ENCODE measurements at regions of chr1 and their contacts with region 1.

Region 1: GRCh38 chr1:21368515-21369289 is 71.2 kb upstream of the NBPF3 start:
- DNase-seq: peak; percentile 69
- H3K4me3 Mint-ChIP-seq: peak overlapping the region; percentile 2
- H3K27ac Mint-ChIP-seq: peak overlapping the region; percentile 10
- H3K4me1 Mint-ChIP-seq: peaks cover 10% of the 10 kb centered on the region
- H3K27me3 Mint-ChIP-seq: no peaks in the 10 kb centered on the region

Region 2: DNA sequence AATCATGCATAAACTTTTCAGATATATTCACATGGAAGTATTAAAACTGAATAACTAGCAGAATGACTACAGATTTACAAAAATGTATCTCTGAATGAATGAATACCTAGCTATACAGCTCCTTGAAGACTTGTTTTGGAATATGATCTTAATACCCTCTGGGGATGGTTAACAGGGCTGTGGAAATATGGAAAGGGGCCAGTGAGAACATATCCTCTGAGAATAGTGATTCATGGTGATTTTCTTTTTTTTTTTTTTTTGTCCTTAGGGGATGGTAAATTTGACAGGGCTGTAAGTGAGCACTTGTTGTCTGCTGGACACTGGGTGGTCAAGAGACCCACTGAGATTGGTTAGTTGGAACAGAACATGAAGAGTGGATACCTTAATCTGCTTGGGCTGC is 500.9 kb before region 1 on chr1:
- CTCF ChIA-PET with region 1: no interaction called
- POLR2A ChIA-PET with region 1: no interaction called
- intact Hi-C with region 1: no loop called
- DNase-seq: no peak
- H3K4me3 Mint-ChIP-seq: no peak overlapping the region
- H3K27ac Mint-ChIP-seq: no peak overlapping the region
- H3K4me1 Mint-ChIP-seq: peaks cover 7% of the 10 kb centered on the region
- H3K27me3 Mint-ChIP-seq: no peaks in the 10 kb centered on the region

Region 3: DNA sequence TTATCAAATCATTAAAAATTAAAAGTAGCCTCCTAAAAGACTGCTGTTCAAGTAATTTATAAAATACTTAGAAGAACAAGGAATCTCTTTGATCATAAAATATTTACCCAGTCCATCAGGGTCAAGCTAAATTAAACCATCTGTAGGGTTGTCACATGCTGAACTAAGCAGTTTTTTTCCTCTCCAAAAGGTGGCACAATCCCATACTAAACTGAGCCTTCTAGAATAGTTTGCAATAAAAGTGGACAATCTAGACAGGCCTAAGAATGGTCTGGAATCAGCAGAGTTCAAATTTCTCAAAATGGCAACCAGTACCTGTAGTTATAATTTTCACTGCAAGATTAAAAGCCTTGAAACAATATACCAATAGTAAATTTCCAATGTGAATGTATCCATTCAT is 386.8 kb before region 1 on chr1:
- CTCF ChIA-PET with region 1: no interaction called
- POLR2A ChIA-PET with region 1: no interaction called
- intact Hi-C with region 1: no loop called
- DNase-seq: no peak
- H3K4me3 Mint-ChIP-seq: no peak overlapping the region
- H3K27ac Mint-ChIP-seq: no peak overlapping the region
- H3K4me1 Mint-ChIP-seq: no peaks in the 10 kb centered on the region
- H3K27me3 Mint-ChIP-seq: no peaks in the 10 kb centered on the region

Region 4: DNA sequence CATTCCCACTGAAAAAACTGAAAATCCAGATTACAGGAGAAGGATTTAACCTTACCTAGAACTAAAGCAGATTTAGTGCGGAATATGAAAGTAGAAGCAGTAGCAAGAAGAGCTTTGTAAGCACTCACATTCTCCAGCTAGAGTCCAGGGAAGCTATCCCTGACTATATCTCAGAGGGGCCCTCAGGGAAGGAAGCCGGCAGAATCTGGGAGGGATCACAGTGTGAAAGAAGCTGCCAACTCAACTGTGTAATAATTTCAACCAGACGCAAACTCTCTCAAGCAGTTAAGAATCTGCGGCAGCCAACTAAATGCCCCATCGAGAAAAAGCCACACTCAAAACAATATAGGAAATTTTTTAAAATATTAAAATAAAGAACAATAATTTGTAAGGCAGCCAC is 355.8 kb before region 1 on chr1:
- CTCF ChIA-PET with region 1: no interaction called
- POLR2A ChIA-PET with region 1: no interaction called
- intact Hi-C with region 1: no loop called
- DNase-seq: no peak
- H3K4me3 Mint-ChIP-seq: no peak overlapping the region
- H3K27ac Mint-ChIP-seq: no peak overlapping the region
- H3K4me1 Mint-ChIP-seq: peaks cover 6% of the 10 kb centered on the region
- H3K27me3 Mint-ChIP-seq: no peaks in the 10 kb centered on the region

Region 5: GRCh38 chr1:21232044-21232443 is 136.7 kb before region 1 on chr1:
- CTCF ChIA-PET with region 1: interaction called, 159 read pairs
- POLR2A ChIA-PET with region 1: no interaction called
- intact Hi-C with region 1: loop called (anchors 1 kb)
- DNase-seq: no peak
- H3K4me3 Mint-ChIP-seq: no peak overlapping the region
- H3K27ac Mint-ChIP-seq: no peak overlapping the region
- H3K4me1 Mint-ChIP-seq: no peaks in the 10 kb centered on the region
- H3K27me3 Mint-ChIP-seq: no peaks in the 10 kb centered on the region

Region 6: GRCh38 chr1:21255278-21255942 is 113.3 kb before region 1 on chr1:
- CTCF ChIA-PET with region 1: interaction called, 128 read pairs
- POLR2A ChIA-PET with region 1: interaction called, 4 read pairs
- intact Hi-C with region 1: loop called (anchors 1 kb)
- DNase-seq: peak; percentile 88
- H3K4me3 Mint-ChIP-seq: no peak overlapping the region
- H3K27ac Mint-ChIP-seq: peak overlapping the region; percentile 59
- H3K4me1 Mint-ChIP-seq: peaks cover 48% of the 10 kb centered on the region
- H3K27me3 Mint-ChIP-seq: no peaks in the 10 kb centered on the region

Region 7: DNA sequence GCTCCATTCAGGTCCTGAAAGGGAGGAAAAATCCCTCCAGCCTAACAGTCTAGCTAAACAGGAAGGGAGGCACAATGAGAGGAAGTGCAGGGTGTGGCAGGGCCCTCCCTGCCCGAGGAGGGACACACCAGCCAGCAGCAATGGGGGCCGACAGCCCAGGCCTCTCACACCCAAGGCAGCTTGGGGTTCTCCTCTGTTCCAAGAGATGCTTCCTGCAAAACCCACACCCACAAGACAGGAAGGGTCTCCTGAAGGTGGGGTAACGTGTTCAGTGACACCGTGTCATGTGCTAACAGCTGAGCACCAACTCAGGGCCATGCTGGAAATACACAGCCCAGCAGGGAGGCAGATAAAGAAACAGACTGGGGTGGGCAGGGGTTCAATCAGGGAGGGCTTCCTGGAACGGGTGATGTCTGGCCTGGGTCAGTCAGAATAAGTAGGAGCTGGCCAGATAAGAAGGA is 88.7 kb before region 1 on chr1:
- CTCF ChIA-PET with region 1: interaction called, 12 read pairs
- POLR2A ChIA-PET with region 1: no interaction called
- intact Hi-C with region 1: no loop called
- DNase-seq: no peak
- H3K4me3 Mint-ChIP-seq: peak overlapping the region; percentile 58
- H3K27ac Mint-ChIP-seq: peak overlapping the region; percentile 96
- H3K4me1 Mint-ChIP-seq: peaks cover 62% of the 10 kb centered on the region
- H3K27me3 Mint-ChIP-seq: no peaks in the 10 kb centered on the region

Region 8: DNA sequence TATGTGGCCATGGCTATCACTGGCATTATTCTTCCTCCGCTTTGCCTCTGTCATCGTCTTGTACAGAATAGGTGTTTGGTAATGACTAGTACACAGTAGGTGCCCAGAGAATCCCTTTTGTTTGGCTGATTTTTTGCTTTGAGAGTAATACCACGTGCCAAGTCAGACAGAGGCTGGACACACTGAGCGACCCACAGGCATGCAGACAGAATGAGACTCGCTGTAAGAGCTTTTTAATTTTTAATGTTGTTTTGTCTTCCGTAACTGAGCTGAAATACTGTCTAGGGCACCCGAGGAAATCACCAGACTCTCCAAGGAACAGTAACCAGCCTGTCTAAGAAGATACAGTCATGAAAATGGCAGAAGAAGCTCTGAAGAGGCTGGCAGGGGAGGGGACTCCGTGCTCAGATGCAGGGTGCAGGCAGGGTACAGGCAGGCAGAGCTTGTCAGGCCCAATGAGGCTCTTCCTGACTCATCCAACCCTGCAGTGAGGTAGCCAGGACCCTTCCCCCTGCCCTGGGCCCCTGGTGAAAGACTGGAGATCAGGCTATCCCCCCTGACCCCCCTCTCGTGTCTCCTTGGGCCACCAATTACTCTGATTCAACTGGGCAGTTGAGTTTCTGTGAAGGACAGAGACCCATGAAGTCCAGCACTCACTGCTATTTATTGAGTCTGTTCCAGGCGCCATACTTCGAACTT is 18.4 kb before region 1 on chr1:
- CTCF ChIA-PET with region 1: interaction called, 15 read pairs
- POLR2A ChIA-PET with region 1: interaction called, 3 read pairs
- intact Hi-C with region 1: no loop called
- DNase-seq: no peak
- H3K4me3 Mint-ChIP-seq: no peak overlapping the region
- H3K27ac Mint-ChIP-seq: no peak overlapping the region
- H3K4me1 Mint-ChIP-seq: no peaks in the 10 kb centered on the region
- H3K27me3 Mint-ChIP-seq: no peaks in the 10 kb centered on the region